ENCODE measurements at regions of chr4 and their contacts with region 1.

Region 1: DNA sequence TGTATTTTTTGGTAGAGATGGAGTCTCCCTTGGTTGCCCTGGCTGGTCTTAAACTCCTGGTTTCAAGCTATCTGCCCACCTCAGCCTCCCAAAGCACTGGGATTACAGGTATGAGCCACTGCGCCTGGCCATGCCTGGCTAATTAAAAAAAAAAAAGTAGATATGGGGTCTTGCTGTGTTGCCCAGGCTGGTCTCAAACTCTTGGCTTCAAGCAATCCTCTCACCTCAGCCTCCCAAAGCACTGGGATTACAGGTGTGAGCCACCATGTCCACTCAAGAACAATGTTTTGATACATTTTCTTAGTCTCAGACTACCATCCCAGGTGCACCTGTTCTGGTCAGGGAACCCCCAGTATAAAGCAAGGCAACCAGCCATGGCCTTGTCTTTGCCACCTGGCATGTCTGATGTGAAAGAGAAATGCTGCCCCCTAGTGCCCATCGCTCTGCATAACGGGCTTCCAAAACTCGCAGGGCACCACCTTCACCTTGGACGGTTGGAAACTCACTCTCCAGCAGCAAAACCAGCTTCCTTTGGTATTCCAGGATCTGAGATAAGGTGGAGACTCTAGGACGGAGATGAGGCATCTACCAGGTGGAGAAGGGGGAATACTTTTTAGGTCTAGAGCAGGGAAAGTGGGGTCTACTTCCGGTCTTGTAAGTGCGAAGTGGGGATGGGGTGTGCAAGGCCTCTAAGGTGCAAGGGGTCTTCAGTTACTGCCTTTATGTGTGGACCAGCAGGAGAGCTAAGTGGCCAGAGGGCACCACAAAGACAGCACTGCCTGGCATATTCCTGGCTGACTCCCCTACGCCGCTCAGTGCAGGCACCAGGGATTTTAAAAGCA is 47.7 kb upstream of the AFAP1 start:
- DNase-seq: no peak
- H3K4me3 ChIP-seq: no peak overlapping the region
- CTCF ChIP-seq: peak; percentile 85

Region 2: DNA sequence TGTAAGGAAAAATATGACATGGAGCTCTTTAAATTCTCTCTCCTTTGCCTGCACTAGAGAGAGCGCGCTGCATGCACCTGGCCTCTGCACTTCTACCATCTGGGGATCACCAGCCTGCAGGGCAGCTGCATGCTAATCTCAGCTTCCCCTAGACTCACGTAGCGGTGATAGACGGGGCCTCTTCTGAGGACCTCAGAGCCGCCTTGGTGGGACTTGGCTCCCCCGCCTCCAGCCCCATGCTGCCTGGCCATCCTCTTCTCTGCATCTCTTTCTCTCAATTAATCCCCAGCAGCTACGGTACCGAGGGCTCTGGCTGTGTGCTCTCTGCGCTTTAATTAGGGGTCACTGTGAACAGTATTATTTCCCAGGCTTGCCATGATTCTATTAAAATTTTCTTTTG is 499.9 kb before region 1 on chr4:
- CTCF ChIA-PET with region 1: no interaction called
- POLR2A ChIA-PET with region 1: no interaction called
- DNase-seq: no peak
- H3K4me3 ChIP-seq: no peak overlapping the region
- CTCF ChIP-seq: no peak

Region 3: GRCh38 chr4:7761720-7762119 is 225.6 kb before region 1 on chr4:
- CTCF ChIA-PET with region 1: interaction called, 35 read pairs
- POLR2A ChIA-PET with region 1: no interaction called
- DNase-seq: no peak
- H3K4me3 ChIP-seq: no peak overlapping the region
- CTCF ChIP-seq: peak; percentile 76

Region 4: GRCh38 chr4:7802093-7802726 is 185.2 kb before region 1 on chr4:
- CTCF ChIA-PET with region 1: interaction called, 193 read pairs
- POLR2A ChIA-PET with region 1: no interaction called
- DNase-seq: no peak
- H3K4me3 ChIP-seq: no peak overlapping the region
- CTCF ChIP-seq: peak; percentile 93

Region 5: DNA sequence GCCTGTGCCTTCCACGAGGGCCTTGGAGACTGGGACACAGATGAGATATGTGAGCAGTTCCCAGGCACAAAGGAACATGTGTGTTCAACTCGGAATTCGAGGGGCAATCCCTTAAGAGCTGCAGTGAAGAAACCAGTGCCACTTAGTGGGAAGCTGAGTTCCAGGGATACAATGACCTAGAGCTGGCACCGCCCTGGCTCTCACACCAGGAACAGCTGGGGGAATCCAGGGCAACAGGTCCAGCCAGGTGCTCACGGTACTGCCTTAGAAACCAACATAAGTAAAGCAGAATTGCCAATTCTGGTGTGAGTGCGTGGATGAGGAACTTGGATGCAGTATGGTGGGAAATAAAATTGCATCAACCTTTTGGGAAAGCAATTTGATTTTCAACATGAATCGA is 170.6 kb before region 1 on chr4:
- CTCF ChIA-PET with region 1: interaction called, 29 read pairs
- POLR2A ChIA-PET with region 1: no interaction called
- DNase-seq: no peak
- H3K4me3 ChIP-seq: no peak overlapping the region
- CTCF ChIP-seq: no peak

Region 6: DNA sequence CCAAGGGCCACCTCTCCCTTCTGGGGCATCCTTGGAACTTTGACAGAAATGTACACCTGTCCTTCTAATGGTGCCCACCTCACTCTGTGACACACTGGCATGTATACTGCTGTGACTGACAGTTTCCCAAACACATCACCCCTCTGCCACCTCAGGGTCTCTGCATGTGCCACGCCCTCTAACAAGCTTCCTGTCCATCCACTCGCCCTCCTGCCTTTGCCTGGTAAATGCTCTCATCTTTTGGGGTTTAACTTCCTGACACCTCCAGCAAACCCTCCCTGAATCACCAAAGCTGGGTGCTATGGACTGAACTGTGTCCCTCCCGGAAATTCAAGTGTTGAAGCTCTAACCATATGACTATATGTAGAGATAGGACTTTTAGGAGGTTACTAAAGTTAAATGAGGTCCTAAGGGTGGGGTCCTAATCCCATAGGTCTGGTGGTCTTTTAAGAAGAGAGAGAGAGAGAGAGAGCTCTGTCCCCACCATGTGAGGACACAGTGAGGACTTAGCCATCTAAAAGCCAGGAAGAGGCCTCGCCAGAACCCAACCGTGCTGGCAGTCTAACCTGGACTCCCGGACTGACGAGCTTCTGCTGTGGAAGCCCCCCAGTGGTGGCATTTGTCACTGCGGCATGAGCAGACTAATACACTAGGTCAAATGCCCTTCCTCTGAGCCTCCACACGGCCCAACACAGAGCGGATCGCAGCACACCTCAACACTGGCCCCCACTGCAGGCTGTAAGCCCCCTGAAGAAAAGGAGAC is 143.4 kb before region 1 on chr4:
- CTCF ChIA-PET with region 1: interaction called, 25 read pairs
- POLR2A ChIA-PET with region 1: no interaction called
- DNase-seq: peak; percentile 41
- H3K4me3 ChIP-seq: no peak overlapping the region
- CTCF ChIP-seq: peak; percentile 72

Region 7: DNA sequence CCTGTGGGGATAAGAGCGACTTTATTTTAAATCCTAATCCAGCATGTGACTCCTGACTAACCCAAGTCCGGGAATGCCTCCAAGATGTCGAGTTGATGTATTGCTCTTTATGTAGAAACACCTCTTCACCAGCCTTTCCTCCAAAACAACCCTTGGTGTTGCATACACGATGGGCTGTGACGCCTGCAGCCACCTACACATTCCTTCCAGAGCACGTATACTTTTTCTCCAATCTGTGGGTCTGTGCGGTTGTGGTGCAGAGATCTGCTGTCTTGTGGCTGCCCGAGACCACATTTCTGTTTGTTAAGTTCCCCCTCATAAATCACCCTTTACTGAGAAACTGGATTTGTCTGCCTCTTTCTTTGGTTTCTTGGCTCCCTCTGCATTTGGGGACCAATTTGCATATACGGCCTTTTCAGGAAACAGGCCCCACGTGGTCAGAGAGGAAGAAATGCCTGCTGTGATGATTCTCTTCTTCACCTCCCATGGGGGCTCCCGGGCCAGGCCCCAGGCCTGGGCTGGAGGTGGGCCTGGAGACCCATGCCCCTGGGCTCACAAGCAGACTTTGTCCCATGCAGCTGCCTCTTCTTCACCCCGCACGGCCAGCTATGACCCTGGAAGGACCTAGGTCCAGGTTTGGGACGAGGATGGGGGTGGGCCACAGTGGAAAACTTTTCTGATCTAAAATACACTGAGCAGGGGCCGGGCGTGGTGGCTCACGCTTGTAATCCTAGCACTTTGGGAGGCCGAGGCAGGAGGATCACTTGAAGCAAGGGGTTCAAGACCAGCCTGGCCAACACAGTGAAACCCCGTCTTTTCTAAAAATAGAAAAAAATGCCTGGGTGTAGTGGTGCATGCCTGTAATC is 26.3 kb before region 1 on chr4:
- CTCF ChIA-PET with region 1: interaction called, 12 read pairs
- POLR2A ChIA-PET with region 1: no interaction called
- DNase-seq: peak; percentile 99
- H3K4me3 ChIP-seq: no peak overlapping the region
- CTCF ChIP-seq: no peak

Region 8: GRCh38 chr4:8171984-8172924 is 184.9 kb after region 1 on chr4:
- CTCF ChIA-PET with region 1: no interaction called
- POLR2A ChIA-PET with region 1: no interaction called
- DNase-seq: no peak
- H3K4me3 ChIP-seq: no peak overlapping the region
- CTCF ChIP-seq: no peak